Heart left ventricle (tissue), 16 donors: ENCODE measurements at regions of chr4 and their contacts with region 1.

Region 1: GRCh38 chr4:127782274-127783025 is at the start of gene HSPA4L:
- DNase-seq: peak; percentile 51 to 66 (median 62)
- ATAC-seq: peak; percentile 52 to 95 (median 74)
- H3K4me3 ChIP-seq: peak within 1 kb of the TSS; percentile 56 to 86 (median 70)
- H3K27ac ChIP-seq: peak within 1 kb of the TSS in 11 of 12 donors; percentile 51 to 87 (median 76)
- H3K4me1 ChIP-seq: peaks cover 0 to 20% (median 9%) of the 10 kb centered on the region in 12 donors
- H3K27me3 ChIP-seq: peaks cover 0 to 26% (median 0%) of the 10 kb centered on the region in 9 donors
- CTCF ChIP-seq: peak in 11 of 12 donors; percentile 14 to 59 (median 34)
- POLR2A ChIP-seq: peak in 1 of 2 donors; percentile 74
- total RNA-seq, gene HSPA4L: 6.4 to 22.9 (median 13.0) TPM

Region 2: DNA sequence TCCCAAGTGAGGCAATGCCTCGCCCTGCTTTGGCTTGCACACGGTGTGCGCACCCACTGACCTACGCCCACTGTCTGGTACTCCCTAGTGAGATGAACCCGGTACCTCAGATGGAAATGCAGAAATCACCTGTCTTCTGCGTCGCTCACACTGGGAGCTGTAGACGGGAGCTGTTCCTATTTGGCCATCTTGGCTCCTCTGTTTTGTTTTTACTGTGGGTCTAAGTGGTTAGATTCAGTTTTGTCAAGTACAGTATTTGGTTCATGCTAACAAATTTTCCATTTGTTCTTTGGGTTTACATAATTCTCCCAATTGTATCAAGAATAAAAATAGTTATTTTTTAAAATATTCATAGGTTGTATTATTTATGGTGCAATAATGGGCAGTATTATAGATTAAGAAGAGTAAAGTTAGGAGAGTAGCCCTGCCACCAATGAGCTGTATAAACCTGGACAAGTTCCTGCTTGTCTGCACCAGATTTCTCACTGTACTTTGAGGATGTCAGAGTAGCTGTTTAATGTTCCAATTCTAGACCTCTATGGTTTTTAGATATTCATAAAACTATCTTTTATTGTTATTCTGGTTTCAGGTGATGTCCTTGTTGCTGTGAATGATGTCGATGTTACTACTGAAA is 126.3 kb before region 1 on chr4:
- intact Hi-C with region 1: no loop called
- DNase-seq: no peak
- ATAC-seq: no peak
- H3K4me3 ChIP-seq: no peak overlapping the region
- H3K27ac ChIP-seq: no peak overlapping the region
- H3K4me1 ChIP-seq: no peaks in the 10 kb centered on the region
- H3K27me3 ChIP-seq: no peaks in the 10 kb centered on the region
- CTCF ChIP-seq: no peak
- POLR2A ChIP-seq: no peak

Region 3: GRCh38 chr4:127870688-127871087 is 88.2 kb after region 1 on chr4:
- intact Hi-C with region 1: loop called in 1 of 10 experiments (anchors 10 kb)
- DNase-seq: peak in 2 of 5 donors; percentile 46 to 48
- ATAC-seq: peak; percentile 55 to 97 (median 92)
- H3K4me3 ChIP-seq: peak overlapping the region in 1 of 12 donors; percentile 2
- H3K27ac ChIP-seq: peak overlapping the region in 10 of 12 donors; percentile 3 to 61 (median 34)
- H3K4me1 ChIP-seq: peaks cover 8 to 19% (median 15%) of the 10 kb centered on the region in 12 donors
- H3K27me3 ChIP-seq: no peaks in the 10 kb centered on the region
- CTCF ChIP-seq: no peak
- POLR2A ChIP-seq: no peak

Region 4: GRCh38 chr4:127880764-127881562 is 98.5 kb after region 1 on chr4 and contains the start of gene PLK4:
- intact Hi-C with region 1: loop called in 5 of 10 experiments (anchors 5 to 10 kb)
- DNase-seq: peak; percentile 94 to 98 (median 97)
- ATAC-seq: peak; percentile 99
- H3K4me3 ChIP-seq: peak within 1 kb of the TSS; percentile 56 to 89 (median 77)
- H3K27ac ChIP-seq: peak within 1 kb of the TSS in 11 of 12 donors; percentile 21 to 90 (median 74)
- H3K4me1 ChIP-seq: peaks cover 0 to 21% (median 10%) of the 10 kb centered on the region in 12 donors
- H3K27me3 ChIP-seq: no peaks in the 10 kb centered on the region
- CTCF ChIP-seq: no peak
- POLR2A ChIP-seq: no peak
- total RNA-seq, gene PLK4: 0.25 to 4.0 (median 1.1) TPM

Region 5: DNA sequence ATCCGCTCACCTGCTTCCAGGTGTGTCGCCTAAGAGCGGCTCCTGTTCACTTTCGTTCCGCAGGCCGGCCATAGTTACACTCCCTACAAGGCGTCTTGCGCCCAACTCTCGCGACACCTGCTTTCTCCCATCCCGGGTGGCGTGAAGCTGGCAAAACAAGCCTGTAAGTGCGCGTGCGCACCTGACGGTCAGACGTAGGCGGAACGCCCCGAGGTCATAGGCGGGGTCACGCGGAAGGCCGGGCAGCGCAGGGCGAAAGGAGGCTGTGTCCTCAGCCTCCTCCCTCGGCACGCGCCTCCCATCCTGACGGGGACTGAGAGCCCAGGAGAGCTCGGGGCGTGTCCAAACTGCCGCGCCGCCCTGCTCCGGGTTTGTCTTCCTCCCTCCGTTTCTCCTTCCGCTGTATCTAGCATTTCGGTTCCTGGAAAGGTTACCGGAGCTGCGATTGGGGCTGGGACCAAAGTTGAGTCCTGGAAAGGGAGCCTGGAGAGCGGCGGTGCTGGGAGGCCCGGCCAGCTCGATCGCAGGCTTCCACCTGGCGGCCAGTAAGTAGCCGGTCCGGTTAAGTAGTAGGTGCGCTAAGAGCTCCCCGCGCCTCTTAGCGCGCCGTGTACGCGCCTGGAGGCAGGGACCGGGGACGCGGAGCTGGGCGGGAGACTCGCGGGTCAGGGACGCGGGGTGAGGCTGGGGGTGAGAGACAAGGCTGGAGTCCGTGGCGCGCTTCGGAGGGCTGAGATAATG is 182.8 kb after region 1 on chr4 and contains the starts of genes ABHD18 and MFSD8:
- intact Hi-C with region 1: loop called in 4 of 10 experiments (anchors 2 to 10 kb)
- DNase-seq: peak; percentile 98 to 100 (median 100)
- ATAC-seq: peak; percentile 95 to 99 (median 98)
- H3K4me3 ChIP-seq: peak within 1 kb of the TSS; percentile 73 to 94 (median 80)
- H3K27ac ChIP-seq: peak within 1 kb of the TSS; percentile 85 to 97 (median 94)
- H3K4me1 ChIP-seq: peaks cover 0 to 46% (median 16%) of the 10 kb centered on the region in 12 donors
- H3K27me3 ChIP-seq: no peaks in the 10 kb centered on the region
- CTCF ChIP-seq: peak in 11 of 12 donors; percentile 8 to 60 (median 47)
- POLR2A ChIP-seq: peak in 1 of 2 donors; percentile 70
- total RNA-seq, gene ABHD18: 6.3 to 56.3 (median 21.0) TPM
- total RNA-seq, gene MFSD8: 6.1 to 17.4 (median 10.3) TPM

Region 6: DNA sequence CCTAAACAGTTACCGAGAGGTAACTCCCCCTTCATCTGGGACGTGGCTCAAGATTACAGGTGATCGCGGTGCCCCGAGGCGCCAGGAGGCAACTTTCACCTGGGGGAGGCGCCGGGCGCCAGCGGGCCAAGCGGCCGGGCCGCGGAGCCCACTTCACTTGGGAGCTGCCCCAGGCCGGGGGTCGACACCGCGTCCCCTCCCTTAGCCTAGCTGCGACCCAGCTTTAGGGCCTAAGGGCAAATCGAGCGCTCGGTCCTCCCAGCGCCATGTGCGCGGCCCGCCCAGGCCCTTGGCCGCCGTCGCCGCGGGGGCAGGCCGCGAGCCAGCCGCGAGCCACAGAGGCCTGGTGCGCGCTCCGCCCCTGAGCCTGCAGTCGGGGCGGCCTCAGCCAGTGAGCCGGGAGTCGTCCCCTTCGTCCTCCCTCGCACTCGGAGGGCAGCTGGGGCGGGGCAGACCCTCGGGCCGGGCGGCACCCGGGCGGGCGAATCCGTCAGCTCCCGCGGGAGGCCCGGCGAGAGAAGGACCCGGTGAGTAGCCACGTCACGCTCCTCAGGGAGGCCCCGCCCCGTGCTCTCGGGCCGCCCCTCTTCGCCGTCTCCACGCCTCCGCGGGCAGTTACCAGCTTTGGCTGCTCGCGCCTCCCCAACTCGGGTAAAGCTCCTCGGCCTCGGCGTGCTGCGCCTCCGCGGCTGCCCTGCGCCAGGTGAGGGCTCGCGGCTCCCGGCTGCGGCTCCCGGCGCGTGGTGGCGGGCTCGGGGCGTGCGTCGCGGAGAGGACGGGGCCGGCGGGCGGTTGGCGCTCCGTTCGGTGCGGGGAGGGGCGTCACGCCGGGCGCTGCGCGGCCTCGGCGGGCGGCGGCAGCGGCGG is 278.5 kb after region 1 on chr4 and contains the start of gene LARP1B:
- intact Hi-C with region 1: loop called in 1 of 10 experiments (anchors 1 kb)
- DNase-seq: peak; percentile 95 to 98 (median 97)
- ATAC-seq: peak; percentile 97 to 98 (median 98)
- H3K4me3 ChIP-seq: peak within 1 kb of the TSS; percentile 70 to 92 (median 76)
- H3K27ac ChIP-seq: peak within 1 kb of the TSS; percentile 87 to 99 (median 97)
- H3K4me1 ChIP-seq: peaks cover 0 to 15% (median 4%) of the 10 kb centered on the region in 12 donors
- H3K27me3 ChIP-seq: no peaks in the 10 kb centered on the region
- CTCF ChIP-seq: no peak
- POLR2A ChIP-seq: peak; percentile 17 to 90
- total RNA-seq, gene LARP1B: 14.8 to 22.5 (median 18.0) TPM